ENCODE measurements at regions of chr2 and their contacts with region 1.

Region 1: DNA sequence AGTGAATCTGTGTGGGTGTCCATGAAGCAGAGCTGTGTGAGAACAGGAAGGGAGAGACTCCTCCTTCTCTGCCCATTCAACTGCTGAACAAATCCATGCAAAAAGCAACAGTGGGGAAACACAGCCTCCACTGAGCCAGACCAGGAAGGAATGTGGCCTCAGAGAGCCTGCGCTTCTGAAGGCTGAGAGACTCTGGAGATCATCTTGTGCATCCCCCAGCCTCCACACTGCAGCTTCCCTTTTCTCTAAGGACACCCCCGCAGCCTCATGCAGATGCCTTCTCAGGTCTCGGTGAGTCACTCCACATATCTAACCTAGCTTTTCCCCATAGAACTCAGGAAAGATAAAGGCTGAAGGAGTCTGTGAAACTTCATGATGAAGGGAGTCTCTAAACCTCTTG is 402.9 kb downstream of the TNS1 start:
- DNase-seq: peak; percentile 29
- ATAC-seq: peak; percentile 35; the same call in 1 of the 2 replicates
- H3K4me3 ChIP-seq: no peak overlapping the region
- H3K27ac ChIP-seq: no peak overlapping the region
- H3K4me1 ChIP-seq: no peaks in the 10 kb centered on the region
- H3K27me3 ChIP-seq: peaks cover 67% of the 10 kb centered on the region
- CTCF ChIP-seq: no peak
- POLR2A ChIP-seq: no peak
- RAD21 ChIP-seq: no peak

Region 2: GRCh38 chr2:217643789-217644301 is 43.9 kb after region 1 on chr2:
- CTCF ChIA-PET with region 1: no interaction called
- POLR2A ChIA-PET with region 1: no interaction called
- dilution Hi-C with region 1: no loop called
- in situ Hi-C with region 1: no loop called
- intact Hi-C with region 1: loop called (anchors 5 kb)
- DNase-seq: no peak
- ATAC-seq: no peak
- H3K4me3 ChIP-seq: no peak overlapping the region
- H3K27ac ChIP-seq: no peak overlapping the region
- H3K4me1 ChIP-seq: no peaks in the 10 kb centered on the region
- H3K27me3 ChIP-seq: no peaks in the 10 kb centered on the region
- CTCF ChIP-seq: no peak
- POLR2A ChIP-seq: no peak
- RAD21 ChIP-seq: no peak

Region 3: DNA sequence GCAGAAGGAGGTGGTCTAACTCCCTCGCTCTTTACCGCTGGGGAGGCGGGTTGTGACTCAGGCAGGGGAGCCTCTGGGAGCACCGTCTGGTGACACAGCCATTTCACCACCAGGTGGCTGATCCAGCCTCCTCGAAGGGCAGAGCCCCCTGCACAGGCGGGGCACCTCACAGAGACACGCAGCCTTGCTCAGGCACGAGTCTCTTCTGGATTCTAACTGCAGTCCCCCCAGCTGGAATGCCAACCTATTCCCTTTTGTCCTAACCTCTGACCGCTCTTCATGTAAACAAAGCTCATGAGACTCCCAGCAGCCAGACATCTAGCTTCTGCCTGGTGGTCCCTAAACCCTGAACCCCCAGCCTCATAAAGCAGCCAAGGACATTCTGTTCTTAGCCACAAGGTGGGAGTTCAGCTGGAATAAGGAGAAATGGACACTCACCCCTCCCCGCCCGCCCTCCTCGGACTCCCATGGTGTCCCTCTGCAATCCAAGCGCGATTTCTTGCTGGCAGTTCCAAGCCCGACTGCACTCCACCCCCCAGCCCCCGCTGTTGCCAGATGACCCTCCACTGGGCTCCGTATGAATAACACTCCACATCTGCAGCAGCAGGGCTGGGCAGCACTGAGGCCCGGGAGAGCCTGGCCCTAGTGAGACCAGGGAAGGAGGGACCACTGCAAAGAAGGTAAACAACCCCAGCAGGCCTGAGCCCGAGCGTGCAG is 318.6 kb after region 1 on chr2:
- CTCF ChIA-PET with region 1: no interaction called
- POLR2A ChIA-PET with region 1: no interaction called
- dilution Hi-C with region 1: no loop called
- in situ Hi-C with region 1: no loop called
- intact Hi-C with region 1: no loop called
- DNase-seq: peak; percentile 39
- ATAC-seq: peak; percentile 5
- H3K4me3 ChIP-seq: no peak overlapping the region
- H3K27ac ChIP-seq: peak overlapping the region; percentile 97
- H3K4me1 ChIP-seq: peaks cover 61% of the 10 kb centered on the region
- H3K27me3 ChIP-seq: no peaks in the 10 kb centered on the region
- CTCF ChIP-seq: peak; percentile 29; the same call in 1 of the 2 replicates
- POLR2A ChIP-seq: no peak
- RAD21 ChIP-seq: peak; percentile 40